Common myeloid progenitor, CD34-positive (primary cell): ENCODE measurements at regions of chr10 and their contacts with region 1.

Region 1: GRCh38 chr10:96513698-96514561 is at the start of gene TLL2:
- DNase-seq: peak; percentile 72 to 85 (median 77)
- H3K4me3 ChIP-seq: peak within 1 kb of the TSS; percentile 40 to 73 (median 64)
- H3K27ac ChIP-seq: no peak within 1 kb of the TSS
- H3K4me1 ChIP-seq: peaks cover 0 to 24% (median 23%) of the 10 kb centered on the region in 4 experiments
- H3K27me3 ChIP-seq: peaks cover 7 to 64% (median 30%) of the 10 kb centered on the region in 5 experiments

Region 2: DNA sequence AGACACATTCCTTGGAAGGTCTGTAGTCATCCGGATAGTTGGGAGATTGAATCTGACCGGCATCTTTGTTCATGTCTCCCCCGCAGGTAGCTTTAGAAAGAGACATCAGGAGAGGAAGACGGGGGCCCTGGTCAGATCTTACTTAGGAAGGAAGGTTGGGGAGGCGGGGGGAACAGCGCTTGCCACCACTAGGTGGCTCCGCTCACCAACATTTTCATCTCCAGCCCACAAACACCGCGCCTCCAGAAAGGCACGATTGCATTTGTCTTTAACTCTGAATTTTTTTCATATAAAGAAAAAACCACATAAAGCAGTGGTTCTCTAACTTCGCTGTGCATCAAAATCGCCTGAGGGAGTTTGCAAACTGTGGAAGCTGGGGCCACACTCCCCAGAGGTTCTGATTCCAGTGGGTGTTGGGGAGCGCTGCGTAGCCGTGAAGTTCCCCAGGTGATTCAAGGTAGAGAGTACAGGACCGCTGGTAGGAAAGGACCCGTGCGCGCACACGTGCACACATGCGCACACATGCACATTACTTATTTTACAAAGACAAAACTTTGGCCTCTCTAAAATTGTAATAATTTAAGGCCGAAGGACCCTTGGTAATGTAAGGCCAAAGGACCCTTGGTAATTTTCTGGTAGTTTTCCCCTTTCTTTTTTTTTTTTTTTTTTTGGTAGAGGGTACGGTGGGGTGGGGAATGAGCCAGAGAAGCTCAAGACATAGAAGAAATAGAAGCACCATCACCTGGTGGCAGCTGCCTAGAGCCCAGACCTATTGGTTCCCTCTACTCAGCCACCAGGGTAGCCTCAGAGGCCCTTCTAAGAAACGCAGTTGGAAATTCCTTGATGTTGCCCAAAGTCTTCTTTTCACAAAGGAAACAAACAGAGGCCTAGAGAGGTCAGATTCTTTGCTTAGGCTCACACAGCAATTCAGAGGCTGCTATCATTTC is 117.7 kb before region 1 on chr10:
- CTCF ChIA-PET with region 1: interaction called, 20 read pairs
- POLR2A ChIA-PET with region 1: no interaction called
- DNase-seq: peak; percentile 79 to 91 (median 86)
- H3K4me3 ChIP-seq: no peak overlapping the region
- H3K27ac ChIP-seq: no peak overlapping the region
- H3K4me1 ChIP-seq: peaks cover 0 to 3% (median 0%) of the 10 kb centered on the region in 4 experiments
- H3K27me3 ChIP-seq: peaks cover 0 to 31% (median 15%) of the 10 kb centered on the region in 5 experiments

Region 3: DNA sequence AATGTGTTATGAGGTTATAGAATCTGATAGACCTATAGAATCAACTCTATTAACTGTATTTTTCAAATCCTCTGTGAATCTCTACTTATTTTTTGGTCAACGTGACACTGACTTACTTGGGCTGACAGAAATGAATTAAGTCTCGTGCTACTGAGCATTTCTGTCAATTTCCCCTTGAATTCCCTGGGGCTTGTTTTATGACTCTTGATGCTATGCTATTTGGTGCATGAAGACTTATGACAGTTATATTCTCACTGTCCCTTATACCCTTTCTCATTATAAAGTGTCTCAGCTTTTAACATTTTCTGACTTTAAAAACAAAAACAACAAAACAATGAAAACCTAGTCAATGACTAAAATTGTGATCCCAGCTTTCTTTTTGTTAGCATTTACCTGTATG is 86.6 kb before region 1 on chr10:
- CTCF ChIA-PET with region 1: no interaction called
- POLR2A ChIA-PET with region 1: no interaction called
- DNase-seq: no peak
- H3K4me3 ChIP-seq: no peak overlapping the region
- H3K27ac ChIP-seq: no peak overlapping the region
- H3K4me1 ChIP-seq: no peaks in the 10 kb centered on the region
- H3K27me3 ChIP-seq: peaks cover 0 to 5% (median 0%) of the 10 kb centered on the region in 5 experiments

Region 4: GRCh38 chr10:96496281-96496925 is 17.5 kb before region 1 on chr10:
- CTCF ChIA-PET with region 1: interaction called, 26 read pairs
- POLR2A ChIA-PET with region 1: no interaction called
- DNase-seq: peak in 2 of 3 donors; percentile 40 to 46
- H3K4me3 ChIP-seq: no peak overlapping the region
- H3K27ac ChIP-seq: no peak overlapping the region
- H3K4me1 ChIP-seq: no peaks in the 10 kb centered on the region
- H3K27me3 ChIP-seq: peaks cover 0 to 9% (median 0%) of the 10 kb centered on the region in 5 experiments

Region 5: GRCh38 chr10:96501985-96502384 is 11.9 kb before region 1 on chr10:
- CTCF ChIA-PET with region 1: interaction called, 26 read pairs
- POLR2A ChIA-PET with region 1: no interaction called
- DNase-seq: no peak
- H3K4me3 ChIP-seq: no peak overlapping the region
- H3K27ac ChIP-seq: no peak overlapping the region
- H3K4me1 ChIP-seq: no peaks in the 10 kb centered on the region
- H3K27me3 ChIP-seq: peaks cover 0 to 5% (median 0%) of the 10 kb centered on the region in 5 experiments

Region 6: GRCh38 chr10:96524741-96525140 is 10.8 kb after region 1 on chr10:
- CTCF ChIA-PET with region 1: interaction called, 10 read pairs
- POLR2A ChIA-PET with region 1: interaction called, 3 read pairs
- DNase-seq: no peak
- H3K4me3 ChIP-seq: no peak overlapping the region
- H3K27ac ChIP-seq: no peak overlapping the region
- H3K4me1 ChIP-seq: peaks cover 0 to 2% (median 0%) of the 10 kb centered on the region in 4 experiments
- H3K27me3 ChIP-seq: no peaks in the 10 kb centered on the region